Activated CD4-positive, alpha-beta T cell treated with anti-CD3 and anti-CD28 coated beads, Interleukin-2, amount 10 ng/mL, durations not matched to agents 24 days and 14 days (primary cell): ENCODE measurements at regions of chr9 and their contacts with region 1.

Region 1: DNA sequence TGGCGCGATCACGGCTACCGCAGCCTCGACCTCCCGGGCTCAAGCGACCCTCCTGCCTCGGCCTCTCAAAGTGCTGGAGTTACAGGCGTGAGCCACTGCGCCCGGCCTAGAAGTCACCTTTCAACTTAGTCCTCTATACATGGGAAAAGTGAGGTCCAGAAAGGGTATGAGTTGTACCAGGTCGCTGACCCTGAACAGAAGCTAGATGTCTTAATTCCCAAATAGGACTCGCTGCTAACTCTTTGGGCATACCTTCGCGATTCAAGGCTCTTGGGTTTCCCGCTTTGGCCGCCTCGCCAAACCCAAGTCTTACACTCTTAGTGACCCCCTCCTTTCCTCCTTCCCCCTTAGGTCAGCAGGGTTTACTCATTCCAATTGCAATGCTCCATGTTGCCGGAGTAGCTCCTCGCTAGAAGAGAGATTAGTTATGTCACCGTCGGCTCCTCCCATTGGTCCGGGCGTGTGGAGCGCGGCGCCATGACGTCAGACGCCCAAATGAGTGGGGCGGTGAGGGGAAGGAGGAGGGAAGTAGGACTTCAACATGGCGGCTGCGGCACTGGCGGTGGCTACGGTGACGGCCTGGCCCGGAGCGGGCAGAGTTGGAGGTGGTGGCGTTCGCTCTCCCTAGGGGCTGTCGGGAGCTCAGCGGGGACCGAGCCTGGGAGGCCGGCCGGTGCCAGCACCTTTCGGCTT is at the start of gene UBAP1:
- DNase-seq: peak; percentile 99
- H3K4me3 Mint-ChIP-seq: peak within 1 kb of the TSS; percentile 92
- H3K27ac Mint-ChIP-seq: peak within 1 kb of the TSS; percentile 96
- H3K4me1 Mint-ChIP-seq: peaks cover 17% of the 10 kb centered on the region
- H3K27me3 Mint-ChIP-seq: no peaks in the 10 kb centered on the region
- total RNA-seq, gene UBAP1: 30.9 and 32.5 TPM in 2 replicates

Region 2: GRCh38 chr9:33374634-33375213 is 803.9 kb before region 1 on chr9:
- intact Hi-C with region 1: no loop called
- DNase-seq: peak; percentile 91
- H3K4me3 Mint-ChIP-seq: peak overlapping the region; percentile 30
- H3K27ac Mint-ChIP-seq: peak overlapping the region; percentile 52
- H3K4me1 Mint-ChIP-seq: peaks cover 10% of the 10 kb centered on the region
- H3K27me3 Mint-ChIP-seq: no peaks in the 10 kb centered on the region

Region 3: GRCh38 chr9:34016149-34016548 is 162.5 kb before region 1 on chr9:
- intact Hi-C with region 1: no loop called
- DNase-seq: no peak
- H3K4me3 Mint-ChIP-seq: no peak overlapping the region
- H3K27ac Mint-ChIP-seq: no peak overlapping the region
- H3K4me1 Mint-ChIP-seq: peaks cover 2% of the 10 kb centered on the region
- H3K27me3 Mint-ChIP-seq: no peaks in the 10 kb centered on the region

Region 4: DNA sequence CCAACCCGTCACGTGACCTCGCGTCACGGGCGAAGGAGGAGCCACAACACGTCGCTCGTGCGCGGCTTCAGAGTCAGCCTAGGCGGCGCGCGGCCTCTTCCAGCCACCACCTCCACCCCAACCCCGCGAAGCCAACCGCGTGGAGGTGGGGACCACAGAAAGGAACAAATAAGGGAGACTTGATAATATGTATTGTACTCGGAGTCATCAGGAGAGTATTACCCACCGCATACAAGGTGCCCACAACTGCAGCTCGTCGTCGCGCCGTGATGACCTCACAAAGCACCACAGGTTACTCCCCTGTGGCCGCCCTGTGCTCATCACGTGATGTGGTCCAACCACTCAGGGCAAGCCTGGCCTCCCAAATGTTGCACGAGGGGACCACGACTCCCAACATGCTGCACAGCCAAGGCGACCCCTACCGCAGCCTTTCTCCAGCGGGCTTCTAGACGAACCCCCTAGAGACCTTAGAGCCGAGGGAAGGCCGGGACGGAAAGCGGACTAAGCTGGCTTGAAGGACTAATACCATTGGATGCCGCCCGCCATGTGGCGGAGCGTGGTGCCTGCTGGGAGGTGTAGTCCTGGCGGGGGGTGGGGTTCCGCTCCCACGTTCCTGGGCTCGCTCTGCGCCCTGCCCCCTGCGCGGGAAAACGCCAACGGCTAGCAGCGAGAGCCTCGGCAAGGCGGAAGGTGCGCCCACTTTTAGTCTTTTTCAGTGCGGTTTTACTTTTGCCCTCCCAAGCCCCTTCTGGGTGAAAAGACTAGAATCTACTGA is 129.6 kb before region 1 on chr9:
- intact Hi-C with region 1: loop called (anchors 2 kb)
- DNase-seq: peak; percentile 99
- H3K4me3 Mint-ChIP-seq: peak overlapping the region; percentile 96
- H3K27ac Mint-ChIP-seq: peak overlapping the region; percentile 99
- H3K4me1 Mint-ChIP-seq: peaks cover 41% of the 10 kb centered on the region
- H3K27me3 Mint-ChIP-seq: peaks cover 3% of the 10 kb centered on the region

Region 5: GRCh38 chr9:34126207-34127034 is 52.2 kb before region 1 on chr9 and contains the start of gene DCAF12:
- intact Hi-C with region 1: loop called (anchors 1 kb)
- DNase-seq: peak; percentile 98
- H3K4me3 Mint-ChIP-seq: peak within 1 kb of the TSS; percentile 92
- H3K27ac Mint-ChIP-seq: peak within 1 kb of the TSS; percentile 98
- H3K4me1 Mint-ChIP-seq: peaks cover 38% of the 10 kb centered on the region
- H3K27me3 Mint-ChIP-seq: no peaks in the 10 kb centered on the region
- total RNA-seq, gene DCAF12: 45.6 and 51.9 TPM in 2 replicates

Region 6: DNA sequence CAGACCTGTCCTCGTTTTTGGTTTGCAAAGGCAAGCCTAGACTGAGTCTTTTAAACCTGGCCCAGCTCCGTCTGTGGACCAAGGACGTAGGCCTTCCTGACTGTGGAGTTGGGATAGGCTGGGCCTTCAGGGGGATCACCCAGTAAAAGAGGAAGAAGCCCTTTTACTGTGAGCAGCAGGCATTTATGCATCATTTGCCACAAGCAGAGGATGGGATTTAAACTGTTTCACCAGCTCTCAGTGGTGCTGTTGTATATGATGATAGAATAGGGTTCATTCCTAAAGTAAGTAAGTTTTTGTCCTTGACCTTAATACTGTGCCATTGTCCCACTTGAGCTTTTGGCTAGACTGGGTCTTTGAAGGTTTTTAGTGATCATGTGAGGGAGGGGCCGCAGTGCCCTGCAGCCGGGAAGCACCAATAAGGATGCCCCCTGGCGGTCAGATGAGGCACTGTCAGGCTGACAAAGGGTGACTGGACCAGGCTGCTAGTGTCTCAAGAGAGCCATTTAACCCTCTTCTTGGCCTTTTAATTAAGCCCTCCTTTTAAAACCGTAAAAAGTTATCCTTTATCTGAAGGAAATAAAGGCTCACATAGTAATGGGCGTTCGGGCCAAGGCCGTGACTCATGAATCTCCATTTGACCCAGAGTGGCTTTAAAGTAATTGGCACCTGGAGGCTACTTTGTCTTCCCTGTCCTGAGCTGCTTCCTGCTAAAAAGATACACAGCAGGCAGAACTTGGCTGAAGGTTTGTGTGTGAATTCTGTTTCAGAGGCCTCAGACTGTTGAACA is 74.2 kb after region 1 on chr9:
- intact Hi-C with region 1: loop called (anchors 5 kb)
- DNase-seq: peak; percentile 90
- H3K4me3 Mint-ChIP-seq: no peak overlapping the region
- H3K27ac Mint-ChIP-seq: no peak overlapping the region
- H3K4me1 Mint-ChIP-seq: peaks cover 5% of the 10 kb centered on the region
- H3K27me3 Mint-ChIP-seq: no peaks in the 10 kb centered on the region

Region 7: DNA sequence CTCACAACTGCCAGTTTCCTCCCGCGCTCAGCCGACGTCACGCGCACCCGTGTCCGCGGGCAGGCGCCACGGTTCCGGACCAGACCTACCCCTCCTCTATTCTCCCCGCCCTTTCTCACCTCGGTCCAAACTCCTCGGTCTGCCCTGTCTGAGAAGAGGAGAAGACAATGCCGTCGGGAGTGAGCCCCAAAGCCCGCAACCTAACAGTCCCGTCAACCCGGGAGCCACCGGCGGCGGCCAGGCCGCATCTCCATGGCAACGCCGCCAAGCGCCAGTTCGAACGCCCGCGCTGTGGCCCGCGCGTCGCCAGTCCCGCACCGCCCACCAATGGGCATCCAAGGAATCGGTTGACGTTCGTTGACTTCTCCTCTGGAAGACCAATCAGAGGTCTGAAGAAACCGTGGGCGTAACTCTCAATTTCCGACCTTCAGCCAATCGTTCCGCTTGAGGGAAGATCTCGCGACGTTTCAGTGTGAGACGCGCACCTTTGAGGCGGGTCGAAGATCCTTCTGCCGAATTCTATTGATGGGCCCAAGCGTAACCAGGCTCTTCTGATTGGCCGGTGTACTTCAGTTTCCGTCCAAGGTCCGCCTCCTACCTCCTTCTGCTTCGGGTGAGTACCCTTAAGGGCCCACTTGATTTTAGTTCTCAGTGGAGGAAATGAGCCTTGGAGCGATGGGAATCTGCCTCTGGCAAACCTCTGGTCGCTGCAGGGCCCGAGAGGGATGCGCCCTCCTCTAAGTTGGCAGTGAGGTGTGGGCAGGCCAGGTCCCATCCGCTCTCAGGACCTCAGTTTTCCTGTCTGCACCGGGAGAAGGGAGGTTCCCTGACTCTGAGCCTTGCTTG is 150.5 kb after region 1 on chr9 and contains the starts of genes KIF24 and NUDT2:
- intact Hi-C with region 1: loop called (anchors 2 kb)
- DNase-seq: peak; percentile 99
- H3K4me3 Mint-ChIP-seq: peak within 1 kb of the TSS; percentile 89
- H3K27ac Mint-ChIP-seq: peak within 1 kb of the TSS; percentile 97
- H3K4me1 Mint-ChIP-seq: peaks cover 32% of the 10 kb centered on the region
- H3K27me3 Mint-ChIP-seq: no peaks in the 10 kb centered on the region
- total RNA-seq, gene KIF24: 5.9 and 6.2 TPM in 2 replicates
- total RNA-seq, gene NUDT2: 30.4 and 31.9 TPM in 2 replicates